Activated naive CD4-positive, alpha-beta T cell treated with anti-CD3 and anti-CD28 coated beads for 36 hours (primary cell): ENCODE measurements at regions of chr3 and their contacts with region 1.

Region 1: GRCh38 chr3:101573449-101574387 is at the start of gene PCNP:
- DNase-seq: peak; percentile 100
- H3K4me3 Mint-ChIP-seq: peak within 1 kb of the TSS; percentile 95
- H3K27ac Mint-ChIP-seq: peak within 1 kb of the TSS; percentile 96
- H3K4me1 Mint-ChIP-seq: peaks cover 67% of the 10 kb centered on the region
- H3K27me3 Mint-ChIP-seq: no peaks in the 10 kb centered on the region
- total RNA-seq, gene PCNP: 261 to 267 TPM

Region 2: GRCh38 chr3:100708967-100709841 is 864.5 kb before region 1 on chr3 and contains the start of gene TFG:
- CTCF ChIA-PET with region 1: no interaction called
- intact Hi-C with region 1: loop called (anchors 1 kb)
- DNase-seq: peak; percentile 98
- H3K4me3 Mint-ChIP-seq: peak within 1 kb of the TSS; percentile 83
- H3K27ac Mint-ChIP-seq: peak within 1 kb of the TSS; percentile 97
- H3K4me1 Mint-ChIP-seq: peaks cover 39% of the 10 kb centered on the region
- H3K27me3 Mint-ChIP-seq: peaks cover 6% of the 10 kb centered on the region
- total RNA-seq, gene TFG: 45.6 to 46.0 TPM

Region 3: GRCh38 chr3:101391413-101391950 is 182.2 kb before region 1 on chr3:
- CTCF ChIA-PET with region 1: no interaction called
- intact Hi-C with region 1: loop called (anchors 1 kb)
- DNase-seq: no peak
- H3K4me3 Mint-ChIP-seq: no peak overlapping the region
- H3K27ac Mint-ChIP-seq: no peak overlapping the region
- H3K4me1 Mint-ChIP-seq: peaks cover 30% of the 10 kb centered on the region
- H3K27me3 Mint-ChIP-seq: no peaks in the 10 kb centered on the region

Region 4: GRCh38 chr3:101531473-101532086 is 42.1 kb before region 1 on chr3:
- CTCF ChIA-PET with region 1: no interaction called
- intact Hi-C with region 1: loop called (anchors 1 kb)
- DNase-seq: peak; percentile 55
- H3K4me3 Mint-ChIP-seq: no peak overlapping the region
- H3K27ac Mint-ChIP-seq: peak overlapping the region; percentile 79
- H3K4me1 Mint-ChIP-seq: peaks cover 36% of the 10 kb centered on the region
- H3K27me3 Mint-ChIP-seq: no peaks in the 10 kb centered on the region

Region 5: DNA sequence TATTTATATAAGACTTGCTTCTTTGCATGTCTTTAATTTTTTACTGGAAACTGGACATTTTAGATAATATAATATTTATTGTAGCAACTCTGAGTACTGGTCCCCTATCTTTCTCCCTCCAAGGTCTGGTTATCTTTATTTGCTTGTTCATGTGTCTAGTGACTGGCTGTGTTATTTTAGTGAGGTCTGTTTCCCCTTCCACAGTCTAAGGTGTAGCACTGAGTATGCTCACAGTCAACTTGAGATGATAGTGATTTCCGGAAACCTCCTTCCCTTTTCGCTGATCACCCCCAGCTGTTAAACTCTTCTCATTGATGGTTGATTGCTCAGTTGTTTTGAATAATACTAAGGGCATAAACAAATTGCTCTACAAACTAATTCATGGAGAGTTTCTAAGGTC is 37.3 kb after region 1 on chr3:
- CTCF ChIA-PET with region 1: no interaction called
- intact Hi-C with region 1: no loop called
- DNase-seq: no peak
- H3K4me3 Mint-ChIP-seq: no peak overlapping the region
- H3K27ac Mint-ChIP-seq: no peak overlapping the region
- H3K4me1 Mint-ChIP-seq: no peaks in the 10 kb centered on the region
- H3K27me3 Mint-ChIP-seq: no peaks in the 10 kb centered on the region

Region 6: GRCh38 chr3:101643861-101644613 is 70.3 kb after region 1 on chr3:
- CTCF ChIA-PET with region 1: no interaction called
- intact Hi-C with region 1: loop called (anchors 1 kb)
- DNase-seq: peak; percentile 69
- H3K4me3 Mint-ChIP-seq: no peak overlapping the region
- H3K27ac Mint-ChIP-seq: peak overlapping the region; percentile 83
- H3K4me1 Mint-ChIP-seq: peaks cover 24% of the 10 kb centered on the region
- H3K27me3 Mint-ChIP-seq: no peaks in the 10 kb centered on the region

Region 7: DNA sequence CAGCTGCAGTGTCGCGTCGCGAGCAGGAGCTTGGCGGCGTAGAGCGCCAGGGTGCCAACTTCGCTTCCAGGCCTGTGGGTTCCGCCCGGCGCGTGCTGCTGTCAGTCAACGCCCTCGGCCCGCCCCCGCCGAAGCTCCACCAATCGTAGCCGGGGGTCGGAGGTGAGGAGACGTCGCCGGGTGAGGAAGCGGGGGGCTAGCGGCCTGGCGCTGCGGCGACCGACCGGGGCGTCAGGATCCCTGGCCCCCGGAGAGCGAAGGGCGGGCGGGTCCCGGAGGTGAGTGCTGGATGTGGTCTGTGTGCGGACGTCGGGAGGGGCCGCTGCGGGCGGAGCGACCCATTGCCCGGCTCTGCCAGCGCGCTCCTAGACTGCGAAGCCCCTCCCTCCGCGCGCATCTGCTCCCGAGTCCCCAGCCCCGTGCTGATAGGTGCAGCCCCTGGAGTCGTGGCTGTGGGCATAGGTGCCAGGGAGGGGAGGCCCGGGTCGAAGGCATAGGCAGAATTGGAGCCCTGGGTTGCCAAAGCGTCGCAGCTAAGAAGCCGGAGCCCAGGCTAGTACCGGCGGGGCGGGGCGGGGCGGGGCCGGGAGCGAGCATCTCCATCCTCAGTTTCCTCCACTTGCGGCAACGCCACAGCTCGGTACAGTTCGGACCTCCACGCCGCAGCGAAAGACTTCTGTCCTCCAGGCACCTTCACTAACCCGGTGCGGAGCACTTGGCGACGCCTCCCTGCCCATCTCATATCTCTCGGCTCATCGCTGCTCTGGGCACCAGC is 205.5 kb after region 1 on chr3 and contains the start of gene NXPE3:
- CTCF ChIA-PET with region 1: interaction called, 3 read pairs
- intact Hi-C with region 1: loop called (anchors 5 kb)
- DNase-seq: peak; percentile 96
- H3K4me3 Mint-ChIP-seq: peak within 1 kb of the TSS; percentile 95
- H3K27ac Mint-ChIP-seq: peak within 1 kb of the TSS; percentile 96
- H3K4me1 Mint-ChIP-seq: peaks cover 49% of the 10 kb centered on the region
- H3K27me3 Mint-ChIP-seq: no peaks in the 10 kb centered on the region
- total RNA-seq, gene NXPE3: 18.9 to 19.3 TPM